Endothelial cell of umbilical vein (primary cell): ENCODE measurements at regions of chr19 and their contacts with region 1.

Region 1: DNA sequence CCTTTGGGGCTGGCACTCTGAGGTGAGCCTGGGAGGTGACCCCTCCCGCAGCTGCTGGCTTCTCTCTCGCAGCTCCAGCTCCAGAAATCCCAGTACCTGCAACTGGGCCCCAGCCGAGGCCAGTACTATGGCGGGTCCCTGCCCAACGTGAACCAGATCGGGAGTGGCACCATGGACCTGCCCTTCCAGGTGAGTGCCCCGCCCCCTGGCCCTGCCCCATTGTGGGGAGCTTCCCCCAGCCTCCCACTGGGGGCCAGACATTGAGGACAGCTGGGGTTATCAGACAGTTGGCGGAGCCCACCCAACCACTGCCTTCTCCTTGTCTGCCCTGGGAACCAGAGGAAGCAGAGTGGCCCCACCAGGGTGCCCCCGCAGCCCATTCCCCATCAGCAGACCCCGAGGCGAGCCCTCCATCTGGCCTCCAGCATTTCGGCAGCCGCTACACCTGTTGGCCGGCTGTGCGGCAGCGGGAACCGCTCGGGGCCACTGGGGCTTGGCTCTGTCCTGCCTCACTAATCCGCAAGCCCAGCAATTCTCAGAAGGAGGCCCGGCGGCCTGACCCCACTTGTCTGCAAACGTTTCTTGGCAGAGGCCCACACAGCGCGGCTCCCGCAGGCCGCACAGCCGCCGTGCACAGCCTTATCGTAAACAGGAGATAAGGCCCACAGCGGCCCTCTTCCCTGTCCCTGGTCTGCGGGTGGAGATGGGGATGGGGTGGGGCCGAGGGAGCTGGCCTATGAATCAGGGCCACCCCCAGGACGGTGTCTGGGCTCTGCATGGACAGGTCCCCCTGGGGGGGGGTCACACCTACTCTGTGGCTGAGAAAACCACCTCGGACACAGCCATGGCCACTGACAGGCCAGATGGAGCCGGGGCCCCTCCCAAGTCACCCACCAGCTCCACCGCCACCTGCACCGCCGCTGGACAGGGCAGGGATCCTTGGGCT is 48.0 kb downstream of the COMP start:
- DNase-seq: peak; percentile 10
- H3K4me3 ChIP-seq: no peak overlapping the region
- H3K27ac ChIP-seq: no peak overlapping the region
- H3K4me1 ChIP-seq: no peaks in the 10 kb centered on the region
- H3K27me3 ChIP-seq: no peaks in the 10 kb centered on the region
- CTCF ChIP-seq: no peak
- POLR2A ChIP-seq: no peak

Region 2: GRCh38 chr19:18713550-18714117 is 29.5 kb before region 1 on chr19:
- CTCF ChIA-PET with region 1: no interaction called
- POLR2A ChIA-PET with region 1: no interaction called
- dilution Hi-C with region 1: no loop called
- intact Hi-C with region 1: no loop called
- DNase-seq: no peak
- H3K4me3 ChIP-seq: no peak overlapping the region
- H3K27ac ChIP-seq: no peak overlapping the region
- H3K4me1 ChIP-seq: peaks cover 2% of the 10 kb centered on the region
- H3K27me3 ChIP-seq: no peaks in the 10 kb centered on the region
- CTCF ChIP-seq: no peak
- POLR2A ChIP-seq: no peak

Region 3: GRCh38 chr19:18785179-18786128 is 42.3 kb after region 1 on chr19:
- CTCF ChIA-PET with region 1: no interaction called
- POLR2A ChIA-PET with region 1: no interaction called
- dilution Hi-C with region 1: no loop called
- intact Hi-C with region 1: loop called (anchors 1 kb)
- DNase-seq: peak; percentile 34
- H3K4me3 ChIP-seq: no peak overlapping the region
- H3K27ac ChIP-seq: no peak overlapping the region
- H3K4me1 ChIP-seq: no peaks in the 10 kb centered on the region
- H3K27me3 ChIP-seq: peaks cover 35 to 36% of the 10 kb centered on the region in 2 experiments
- CTCF ChIP-seq: no peak
- POLR2A ChIP-seq: no peak